ENCODE measurements at regions of chr12 and their contacts with region 1.

Region 1: DNA sequence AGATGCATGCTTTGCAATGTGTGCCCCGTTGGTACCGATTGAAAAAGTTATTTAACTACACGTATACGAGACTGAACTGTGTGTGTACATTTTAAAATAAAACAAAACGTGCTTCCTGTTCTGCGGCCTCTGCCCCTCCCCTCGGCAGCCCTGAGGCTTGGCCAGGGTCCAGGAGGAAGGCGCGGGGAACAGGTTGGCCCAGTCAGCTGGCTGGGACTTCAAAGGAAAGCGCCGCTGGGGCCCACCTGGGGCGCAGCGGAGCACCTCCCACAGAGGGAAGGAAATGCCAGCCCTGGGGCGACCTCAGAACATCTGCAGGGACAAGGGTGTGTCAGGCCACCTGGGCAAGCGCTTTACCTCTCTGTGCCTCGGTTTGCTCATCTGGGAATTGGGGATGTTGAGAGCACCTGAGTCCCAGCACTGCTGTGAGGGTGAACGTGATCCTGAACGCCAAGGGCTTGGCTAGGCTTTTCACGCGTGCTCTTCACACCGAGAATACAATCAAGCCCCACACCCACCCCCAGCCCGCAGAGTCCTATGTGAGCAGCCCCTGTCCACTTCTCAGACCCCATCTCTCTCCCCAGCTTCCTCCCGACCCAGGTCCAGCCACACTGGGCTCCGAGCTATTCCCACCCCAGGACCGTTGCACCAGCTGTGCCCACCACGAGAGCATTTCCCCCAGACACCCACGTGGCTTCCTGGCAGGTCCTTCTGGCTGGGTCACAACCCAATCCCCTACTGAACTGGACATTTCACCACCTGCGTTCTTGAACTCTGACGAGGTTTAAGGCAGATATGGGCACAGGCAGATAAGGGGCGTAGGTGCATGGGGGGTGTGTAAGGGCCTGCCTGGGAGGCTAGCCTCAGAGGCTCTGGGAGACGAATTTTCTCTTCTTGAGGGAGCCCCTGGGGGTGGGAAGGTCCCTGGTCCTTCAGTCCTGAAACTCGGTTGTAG is 41.9 kb upstream of the NCOR2 start:
- DNase-seq: peak; percentile 92 to 94 (median 93)
- H3K4me3 ChIP-seq: peak overlapping the region; percentile 4 to 32
- H3K4me3 Mint-ChIP-seq: peak overlapping the region; percentile 79 to 88 (median 84)
- H3K27ac ChIP-seq: no peak overlapping the region
- H3K27ac Mint-ChIP-seq: peak overlapping the region; percentile 9 to 93 (median 80)
- H3K4me1 ChIP-seq: peaks cover 32% of the 10 kb centered on the region
- H3K4me1 Mint-ChIP-seq: peaks cover 22 to 43% (median 32%) of the 10 kb centered on the region in 4 donors
- H3K27me3 ChIP-seq: no peaks in the 10 kb centered on the region
- H3K27me3 Mint-ChIP-seq: no peaks in the 10 kb centered on the region

Region 2: DNA sequence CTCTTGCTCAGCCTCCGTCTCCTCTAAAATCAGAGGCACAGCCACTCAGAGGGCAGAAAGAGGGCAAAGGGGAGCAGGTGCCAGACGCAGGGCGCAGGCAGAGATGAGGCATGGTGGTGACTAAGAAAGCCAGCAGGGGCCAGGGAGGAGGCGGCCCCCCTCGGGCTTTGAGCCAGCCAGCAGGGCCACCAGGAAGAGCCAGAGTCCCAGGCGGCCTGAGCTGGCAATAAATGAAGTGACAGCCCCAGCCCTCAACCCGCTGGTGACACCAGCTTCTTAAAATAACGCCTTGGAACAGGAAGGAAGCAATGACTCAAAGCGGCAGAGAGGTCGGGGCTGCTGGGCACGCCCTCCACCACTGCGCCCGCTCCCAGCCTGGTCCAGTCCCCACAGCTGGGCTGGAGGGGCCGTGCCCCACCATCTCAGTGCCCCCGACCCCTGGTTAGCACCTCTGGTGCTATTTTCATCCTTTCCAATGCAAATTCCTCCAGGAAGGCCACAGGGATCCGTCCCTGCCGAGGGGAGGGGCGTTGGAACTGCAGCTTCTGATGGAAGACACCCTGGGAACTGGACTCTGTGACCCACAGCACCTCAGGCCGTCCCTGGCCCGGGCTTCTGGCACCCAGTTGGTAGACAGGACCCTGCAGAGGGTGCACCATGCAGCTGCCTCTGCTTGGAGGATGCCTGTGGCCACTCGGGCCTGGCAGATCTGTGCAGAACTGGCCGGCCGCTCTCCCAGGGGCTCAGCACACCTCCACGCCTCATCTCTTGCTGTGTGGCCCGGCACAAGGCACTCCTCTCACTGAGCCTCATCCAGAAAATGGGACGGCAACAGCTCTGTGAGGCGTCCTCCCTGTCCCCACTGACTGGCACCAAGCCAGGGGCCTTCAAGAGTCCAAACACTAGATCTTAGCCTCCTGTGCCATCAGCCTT is 155.6 kb before region 1 on chr12:
- CTCF ChIA-PET with region 1: no interaction called
- POLR2A ChIA-PET with region 1: no interaction called
- intact Hi-C with region 1: loop called (anchors 2 kb)
- DNase-seq: peak; percentile 74 to 96 (median 76)
- H3K4me3 ChIP-seq: peak overlapping the region in 1 of 2 donors; percentile 46
- H3K4me3 Mint-ChIP-seq: peak overlapping the region; percentile 52 to 81 (median 70)
- H3K27ac ChIP-seq: peak overlapping the region; percentile 67
- H3K27ac Mint-ChIP-seq: peak overlapping the region; percentile 82 to 93 (median 88)
- H3K4me1 ChIP-seq: peaks cover 76% of the 10 kb centered on the region
- H3K4me1 Mint-ChIP-seq: peaks cover 26 to 75% (median 54%) of the 10 kb centered on the region in 4 donors
- H3K27me3 ChIP-seq: no peaks in the 10 kb centered on the region
- H3K27me3 Mint-ChIP-seq: no peaks in the 10 kb centered on the region

Region 3: GRCh38 chr12:124713436-124714082 is 104.2 kb after region 1 on chr12:
- CTCF ChIA-PET with region 1: no interaction called
- POLR2A ChIA-PET with region 1: no interaction called
- intact Hi-C with region 1: loop called (anchors 10 kb)
- DNase-seq: peak; percentile 52 to 76 (median 64)
- H3K4me3 ChIP-seq: peak overlapping the region; percentile 20 to 54
- H3K4me3 Mint-ChIP-seq: peak overlapping the region; percentile 75 to 95 (median 83)
- H3K27ac ChIP-seq: peak overlapping the region; percentile 25
- H3K27ac Mint-ChIP-seq: peak overlapping the region; percentile 77 to 93 (median 86)
- H3K4me1 ChIP-seq: peaks cover 17% of the 10 kb centered on the region
- H3K4me1 Mint-ChIP-seq: peaks cover 10 to 20% (median 13%) of the 10 kb centered on the region in 4 donors
- H3K27me3 ChIP-seq: no peaks in the 10 kb centered on the region
- H3K27me3 Mint-ChIP-seq: no peaks in the 10 kb centered on the region

Region 4: GRCh38 chr12:124779161-124780141 is 170.1 kb after region 1 on chr12:
- CTCF ChIA-PET with region 1: no interaction called
- POLR2A ChIA-PET with region 1: no interaction called
- intact Hi-C with region 1: no loop called
- DNase-seq: no peak
- H3K4me3 ChIP-seq: no peak overlapping the region
- H3K4me3 Mint-ChIP-seq: no peak overlapping the region
- H3K27ac ChIP-seq: no peak overlapping the region
- H3K27ac Mint-ChIP-seq: peak overlapping the region in 1 of 7 donors; percentile 46
- H3K4me1 ChIP-seq: peaks cover 9% of the 10 kb centered on the region
- H3K4me1 Mint-ChIP-seq: peaks cover 9 to 10% (median 9%) of the 10 kb centered on the region in 4 donors
- H3K27me3 ChIP-seq: no peaks in the 10 kb centered on the region
- H3K27me3 Mint-ChIP-seq: peaks cover 0 to 1% of the 10 kb centered on the region in 2 donors

Measured in CD4-positive, alpha-beta memory T cell (primary cell).